Heart right ventricle (tissue), 16 donors: ENCODE measurements at regions of chr22 and their contacts with region 1.

Region 1: GRCh38 chr22:29524440-29525191 is 28.9 kb downstream of the THOC5 start:
- DNase-seq: peak in 1 of 2 donors; percentile 10
- ATAC-seq: peak in 7 of 8 donors; percentile 38 to 86 (median 73)
- H3K4me3 ChIP-seq: no peak overlapping the region
- H3K27ac ChIP-seq: no peak overlapping the region
- H3K4me1 ChIP-seq: no peaks in the 10 kb centered on the region
- H3K27me3 ChIP-seq: no peaks in the 10 kb centered on the region
- CTCF ChIP-seq: peak; percentile 20 to 54 (median 49)

Region 2: DNA sequence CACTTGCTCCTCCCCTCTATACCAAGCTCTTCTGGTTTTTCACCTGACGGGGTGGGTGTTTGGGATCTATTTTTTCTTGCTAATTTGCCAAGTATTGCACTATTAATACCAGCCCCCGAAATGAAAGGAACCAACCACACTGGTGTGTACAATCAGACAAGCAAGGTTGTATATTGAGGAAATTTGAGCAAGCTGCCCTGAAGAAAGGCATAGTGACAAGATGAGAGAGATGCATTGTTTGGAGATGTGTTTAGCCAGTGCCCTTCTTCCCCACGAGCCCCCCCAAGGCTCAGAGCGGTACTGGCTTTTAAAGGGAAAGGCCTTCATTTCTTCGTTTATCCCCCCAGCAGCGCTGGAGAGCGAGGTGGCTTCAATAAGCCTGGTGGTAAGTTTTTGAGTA is 233.4 kb before region 1 on chr22:
- intact Hi-C with region 1: loop called in 1 of 10 experiments (anchors 10 kb)
- DNase-seq: no peak
- ATAC-seq: no peak
- H3K4me3 ChIP-seq: no peak overlapping the region
- H3K27ac ChIP-seq: no peak overlapping the region
- H3K4me1 ChIP-seq: peaks cover 0 to 8% (median 0%) of the 10 kb centered on the region in 9 donors
- H3K27me3 ChIP-seq: no peaks in the 10 kb centered on the region
- CTCF ChIP-seq: no peak

Region 3: DNA sequence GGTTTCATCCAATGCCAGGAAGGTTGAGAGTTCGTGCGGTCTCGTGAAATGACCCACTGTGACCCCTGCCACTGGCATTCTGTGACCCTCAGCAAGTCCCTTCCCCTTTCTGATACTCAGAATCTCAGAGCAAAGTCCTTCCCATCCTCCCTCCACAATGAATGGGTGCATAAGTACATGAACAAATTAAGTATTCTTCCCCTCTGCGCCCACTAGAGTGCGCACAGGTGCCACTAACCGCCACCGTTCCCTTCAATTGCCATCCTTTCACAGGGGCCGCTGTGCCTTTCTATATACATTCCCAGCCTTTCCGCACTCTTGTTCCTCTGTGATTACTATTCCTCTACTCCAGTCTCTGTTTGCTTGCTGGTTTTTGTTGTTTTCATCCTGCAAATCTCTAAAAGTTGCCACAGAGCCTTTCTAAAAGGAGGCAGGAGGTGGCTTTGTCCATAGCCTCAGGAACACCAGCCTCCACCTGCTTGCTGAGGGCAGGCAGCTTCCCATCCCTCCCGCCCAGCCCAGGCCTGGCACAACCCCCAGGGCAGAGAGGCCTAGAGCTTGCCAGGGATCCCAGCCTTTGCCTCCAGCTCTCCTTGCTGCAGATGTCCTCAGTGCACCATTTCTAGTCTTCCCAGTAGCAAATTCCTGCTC is 129.6 kb before region 1 on chr22:
- intact Hi-C with region 1: loop called (anchors 1 to 10 kb)
- DNase-seq: peak; percentile 53 to 67
- ATAC-seq: peak; percentile 75 to 93 (median 86)
- H3K4me3 ChIP-seq: no peak overlapping the region
- H3K27ac ChIP-seq: no peak overlapping the region
- H3K4me1 ChIP-seq: peaks cover 0 to 15% (median 4%) of the 10 kb centered on the region in 9 donors
- H3K27me3 ChIP-seq: no peaks in the 10 kb centered on the region
- CTCF ChIP-seq: peak; percentile 56 to 89 (median 81)

Region 4: DNA sequence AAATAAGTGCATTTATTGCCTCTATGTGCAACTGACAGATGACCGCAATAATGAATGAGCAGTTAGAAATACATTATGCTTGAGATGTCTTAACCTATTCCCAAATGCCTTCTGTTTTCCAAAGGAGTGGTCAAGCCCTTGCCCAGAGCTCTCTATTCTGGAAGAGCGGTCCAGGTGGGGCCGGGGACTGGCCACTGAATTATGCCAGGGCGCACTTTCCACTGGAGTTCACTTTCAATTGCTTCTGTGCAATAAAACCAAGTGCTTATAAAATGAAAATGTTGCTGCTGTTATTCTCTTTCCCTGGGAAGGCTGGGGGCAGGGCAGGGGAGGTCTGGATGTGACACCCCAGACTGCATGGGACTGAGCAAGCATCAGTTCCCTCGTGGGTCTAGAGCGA is 33.6 kb before region 1 on chr22:
- intact Hi-C with region 1: no loop called
- DNase-seq: no peak
- ATAC-seq: no peak
- H3K4me3 ChIP-seq: no peak overlapping the region
- H3K27ac ChIP-seq: no peak overlapping the region
- H3K4me1 ChIP-seq: no peaks in the 10 kb centered on the region
- H3K27me3 ChIP-seq: no peaks in the 10 kb centered on the region
- CTCF ChIP-seq: no peak

Region 5: GRCh38 chr22:29563652-29564460 is 39.2 kb after region 1 on chr22:
- intact Hi-C with region 1: no loop called
- DNase-seq: no peak
- ATAC-seq: peak in 7 of 8 donors; percentile 22 to 90 (median 58)
- H3K4me3 ChIP-seq: no peak overlapping the region
- H3K27ac ChIP-seq: no peak overlapping the region
- H3K4me1 ChIP-seq: no peaks in the 10 kb centered on the region
- H3K27me3 ChIP-seq: no peaks in the 10 kb centered on the region
- CTCF ChIP-seq: no peak